K562 (cell line): ENCODE measurements at regions of chr14 and their contacts with region 1.

Region 1: GRCh38 chr14:91264151-91265150 is 19.9 kb upstream of the GPR68 start:
- DNase-seq: peak; percentile 46 to 63 (median 56)
- ATAC-seq: peak; percentile 64
- H3K4me3 ChIP-seq: peak overlapping the region; percentile 61
- H3K27ac ChIP-seq: peak overlapping the region; percentile 84
- H3K4me1 ChIP-seq: peaks cover 37 to 43% of the 10 kb centered on the region in 2 experiments
- H3K27me3 ChIP-seq: no peaks in the 10 kb centered on the region
- CTCF ChIP-seq: no peak
- EP300 ChIP-seq: no peak
- POLR2A ChIP-seq: no peak; the same call in 1 of the 2 replicates
- RAD21 ChIP-seq: no peak

Region 2: DNA sequence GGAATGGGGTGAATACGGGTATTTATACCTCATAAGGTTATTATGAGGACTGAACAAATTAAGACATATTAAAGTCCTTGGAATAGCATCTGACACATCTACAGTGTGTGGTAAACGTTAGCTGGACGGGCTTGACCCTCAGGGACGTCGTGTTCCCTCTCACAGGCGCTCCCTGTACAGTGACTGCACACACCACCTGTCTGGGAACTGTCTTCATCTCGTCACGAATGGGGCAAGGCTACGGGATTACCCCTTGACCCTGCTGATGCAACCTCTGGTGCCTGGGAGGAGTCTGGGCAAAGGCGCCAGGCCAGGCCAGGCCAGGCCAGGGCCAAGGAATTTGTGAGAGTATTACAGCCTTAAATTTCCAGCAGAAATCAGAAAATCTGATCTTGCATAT is 676.5 kb before region 1 on chr14:
- CTCF ChIA-PET with region 1: no interaction called
- POLR2A ChIA-PET with region 1: no interaction called
- in situ Hi-C with region 1: no loop called
- intact Hi-C with region 1: no loop called
- DNase-seq: no peak
- ATAC-seq: no peak
- H3K4me3 ChIP-seq: no peak overlapping the region
- H3K27ac ChIP-seq: no peak overlapping the region
- H3K4me1 ChIP-seq: no peaks in the 10 kb centered on the region
- H3K27me3 ChIP-seq: no peaks in the 10 kb centered on the region
- CTCF ChIP-seq: no peak
- EP300 ChIP-seq: no peak
- POLR2A ChIP-seq: no peak
- RAD21 ChIP-seq: no peak

Region 3: GRCh38 chr14:91202234-91202974 is 62.0 kb before region 1 on chr14:
- CTCF ChIA-PET with region 1: no interaction called
- POLR2A ChIA-PET with region 1: no interaction called
- in situ Hi-C with region 1: no loop called
- intact Hi-C with region 1: loop called (anchors 5 kb)
- DNase-seq: peak; percentile 70 to 94 (median 73)
- ATAC-seq: peak; percentile 96
- H3K4me3 ChIP-seq: no peak overlapping the region; the same call in 1 of the 2 replicates
- H3K27ac ChIP-seq: peak overlapping the region; percentile 86
- H3K4me1 ChIP-seq: peaks cover 11 to 23% of the 10 kb centered on the region in 2 experiments
- H3K27me3 ChIP-seq: no peaks in the 10 kb centered on the region
- CTCF ChIP-seq: no peak
- EP300 ChIP-seq: peak; percentile 91
- POLR2A ChIP-seq: peak; percentile 38; the same call in 1 of the 2 replicates
- RAD21 ChIP-seq: peak in 1 of 2 experiments; percentile 38; a peak in 1 of 4 replicates